AG04450 (cell line): ENCODE measurements at regions of chr10 and their contacts with region 1.

Region 1: DNA sequence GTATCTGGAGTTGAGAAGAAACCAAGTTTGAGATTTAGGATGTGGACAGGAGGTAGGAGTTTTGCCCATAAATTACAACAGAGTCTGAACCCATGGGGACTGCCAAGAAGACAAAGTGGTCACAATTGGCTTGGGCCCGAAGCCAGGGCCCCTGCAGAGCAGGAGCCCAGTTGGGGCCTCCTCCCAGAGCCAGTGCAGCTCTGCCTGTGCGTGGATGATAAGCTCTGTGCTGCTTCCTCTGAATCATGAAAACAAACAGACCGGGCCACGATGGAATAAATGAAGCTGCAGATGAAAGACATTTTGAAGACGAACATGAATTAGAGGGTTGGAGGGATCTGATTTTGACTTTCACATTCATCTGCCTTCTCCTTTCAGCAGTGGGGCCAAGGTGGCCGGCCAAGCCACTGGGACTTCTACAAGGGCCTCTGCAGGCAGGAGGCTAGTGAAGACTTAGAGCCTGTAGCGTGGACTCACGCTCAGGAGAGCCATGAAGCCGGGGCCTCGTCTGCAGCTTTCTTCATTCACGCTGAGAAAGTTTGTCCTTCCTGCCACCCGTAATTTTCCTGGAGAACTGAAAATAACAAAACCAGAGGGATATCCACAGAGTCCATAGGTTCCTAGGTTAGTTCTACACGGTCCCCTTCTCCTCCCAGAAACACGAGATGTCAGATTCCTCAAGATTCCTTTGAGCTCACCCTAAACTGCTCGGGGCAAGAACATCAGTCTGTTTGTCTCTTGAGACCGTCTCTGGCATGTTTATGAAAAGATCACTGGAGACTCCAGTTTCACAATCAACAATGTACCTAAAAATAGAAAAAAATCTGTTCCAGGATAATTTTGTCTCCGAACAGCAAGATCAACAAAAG is 156.7 kb upstream of the LYZL1 start:
- DNase-seq: no peak
- H3K4me3 ChIP-seq: no peak overlapping the region
- H3K27ac ChIP-seq: no peak overlapping the region
- H3K27me3 ChIP-seq: no peaks in the 10 kb centered on the region
- CTCF ChIP-seq: no peak

Region 2: DNA sequence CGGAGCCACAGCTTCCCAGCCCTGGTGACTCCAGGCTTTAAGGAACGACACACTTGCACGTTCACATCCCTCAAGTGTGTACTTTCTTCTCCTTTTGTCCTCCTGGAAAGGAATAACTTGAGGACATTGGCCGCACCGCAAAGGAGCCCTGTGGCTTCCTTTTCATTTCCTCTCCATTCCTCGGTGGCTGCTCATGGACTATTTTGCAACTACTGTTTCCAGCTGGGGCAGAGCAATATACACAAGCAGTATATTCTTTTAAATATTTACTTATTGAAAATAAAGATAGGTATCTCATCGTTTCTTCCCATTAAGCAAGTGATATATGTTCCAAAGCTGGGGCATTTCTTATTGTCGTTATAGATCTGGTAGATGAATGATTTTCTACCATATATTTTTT is 59.5 kb after region 1 on chr10:
- CTCF ChIA-PET with region 1: interaction called, 11 read pairs
- POLR2A ChIA-PET with region 1: no interaction called
- DNase-seq: no peak
- H3K4me3 ChIP-seq: no peak overlapping the region
- H3K27ac ChIP-seq: no peak overlapping the region
- H3K27me3 ChIP-seq: peaks cover 25% of the 10 kb centered on the region
- CTCF ChIP-seq: no peak

Region 3: GRCh38 chr10:29522061-29522855 is 390.1 kb after region 1 on chr10:
- CTCF ChIA-PET with region 1: no interaction called
- POLR2A ChIA-PET with region 1: no interaction called
- DNase-seq: no peak
- H3K4me3 ChIP-seq: no peak overlapping the region
- H3K27ac ChIP-seq: peak overlapping the region; percentile 47
- H3K27me3 ChIP-seq: no peaks in the 10 kb centered on the region
- CTCF ChIP-seq: no peak

Region 4: GRCh38 chr10:29757551-29758297 is 625.5 kb after region 1 on chr10:
- CTCF ChIA-PET with region 1: no interaction called
- POLR2A ChIA-PET with region 1: no interaction called
- DNase-seq: no peak
- H3K4me3 ChIP-seq: no peak overlapping the region
- H3K27ac ChIP-seq: no peak overlapping the region
- H3K27me3 ChIP-seq: no peaks in the 10 kb centered on the region
- CTCF ChIP-seq: no peak